Activated B cell treated with CpG ODN at 0.5 μM for 24 hours (primary cell): ENCODE measurements at regions of chr7 and their contacts with region 1.

Region 1: DNA sequence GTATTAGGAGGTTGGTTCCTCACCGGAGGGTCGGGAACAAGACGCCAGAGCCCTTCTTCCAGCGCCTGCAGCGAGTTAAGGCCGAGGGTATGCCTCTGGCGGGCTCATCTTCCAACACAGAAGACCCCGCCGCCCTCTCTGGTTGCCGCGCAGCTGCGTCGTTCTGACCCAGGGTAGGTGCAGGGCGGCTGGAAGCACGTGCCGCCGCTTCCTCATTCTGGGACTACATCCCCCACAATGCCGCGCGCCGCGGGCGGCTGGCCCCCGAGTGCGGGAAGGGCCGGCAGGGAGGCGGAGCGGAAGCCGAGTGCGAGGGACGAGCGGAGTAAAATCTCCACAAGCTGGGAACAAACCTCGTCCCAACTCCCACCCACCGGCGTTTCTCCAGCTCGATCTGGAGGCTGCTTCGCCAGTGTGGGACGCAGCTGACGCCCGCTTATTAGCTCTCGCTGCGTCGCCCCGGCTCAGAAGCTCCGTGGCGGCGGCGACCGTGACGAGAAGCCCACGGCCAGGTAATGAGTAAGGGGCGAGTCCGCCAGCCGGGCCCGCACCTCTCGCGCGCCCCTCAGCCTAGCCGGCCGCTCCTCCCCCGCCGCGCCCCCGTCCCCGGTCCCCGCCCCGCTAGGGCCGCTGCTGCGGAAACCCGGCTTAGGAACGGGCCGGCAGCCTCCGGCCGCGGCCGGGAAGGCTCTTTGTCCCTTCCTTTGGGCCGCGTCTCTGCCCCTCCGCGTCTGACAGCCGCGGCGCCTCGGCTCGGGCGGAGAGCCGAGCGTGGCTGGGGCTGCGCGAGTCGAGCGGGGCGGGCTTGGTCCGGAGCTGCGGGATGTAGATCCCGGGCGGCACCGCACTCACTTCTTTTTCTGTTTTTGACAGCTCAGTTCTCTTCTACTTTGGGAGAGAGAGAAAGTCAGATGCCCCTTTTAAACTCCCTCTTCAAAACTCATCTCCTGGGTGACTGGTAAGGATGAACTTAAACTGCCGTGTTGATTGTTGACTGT is at the start of gene CCDC126:
- DNase-seq: peak; percentile 84
- ATAC-seq: peak; percentile 72
- H3K4me3 Mint-ChIP-seq: peak within 1 kb of the TSS; percentile 89
- H3K27ac Mint-ChIP-seq: peak within 1 kb of the TSS; percentile 51
- H3K4me1 Mint-ChIP-seq: peaks cover 58% of the 10 kb centered on the region
- H3K27me3 Mint-ChIP-seq: no peaks in the 10 kb centered on the region
- CTCF ChIP-seq: no peak
- total RNA-seq, gene CCDC126: 13.7 and 15.7 TPM in 2 replicates

Region 2: DNA sequence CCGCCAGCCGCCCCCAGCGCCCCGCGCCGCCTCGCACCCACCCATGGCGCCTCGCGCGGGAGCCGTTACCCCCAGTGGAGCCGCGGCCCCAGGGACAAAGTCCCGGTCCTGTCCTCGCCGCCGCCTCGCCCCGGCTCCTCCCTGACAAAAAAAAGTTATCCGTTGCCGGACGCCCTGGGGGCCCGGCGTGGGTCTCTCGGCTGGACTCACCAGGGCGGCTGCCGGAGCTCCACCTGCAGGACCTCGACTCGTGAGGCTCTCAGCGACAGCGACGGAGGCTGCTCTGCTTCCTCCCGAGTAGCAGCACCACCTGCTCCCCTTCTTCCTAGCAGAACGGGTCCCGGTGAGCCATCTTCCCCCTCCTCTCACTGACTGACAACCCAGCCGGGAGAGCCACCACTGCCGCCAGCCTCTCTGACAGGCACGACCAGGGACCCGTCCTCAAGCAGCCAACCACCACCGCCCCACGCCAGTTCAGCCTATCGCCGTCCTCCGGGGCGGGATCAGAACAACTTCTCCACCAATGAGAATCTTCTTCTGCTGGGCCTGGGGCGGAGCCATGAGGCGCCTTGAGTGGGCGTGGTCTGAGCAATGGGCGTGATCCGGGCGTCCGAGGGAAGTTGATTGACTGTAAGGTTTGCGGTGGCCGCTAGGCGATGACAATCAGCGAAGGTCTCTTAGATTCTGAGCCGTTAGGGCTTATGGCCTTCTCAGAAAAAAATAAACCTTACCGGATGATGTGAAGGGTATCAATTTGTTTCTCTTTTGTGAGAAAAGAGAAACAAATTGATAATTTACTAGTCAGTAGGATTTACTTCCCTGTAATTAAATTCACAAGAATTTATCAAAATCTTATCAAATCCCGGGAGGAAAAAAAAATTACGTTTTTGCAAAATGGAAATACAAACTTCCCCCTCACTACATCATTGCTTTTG is 583.4 kb before region 1 on chr7 and contains the start of gene HYCC1:
- CTCF ChIA-PET with region 1: no interaction called
- POLR2A ChIA-PET with region 1: no interaction called
- intact Hi-C with region 1: loop called (anchors 5 kb)
- DNase-seq: peak; percentile 95
- ATAC-seq: peak; percentile 96
- H3K4me3 Mint-ChIP-seq: peak within 1 kb of the TSS; percentile 99
- H3K27ac Mint-ChIP-seq: peak within 1 kb of the TSS; percentile 93
- H3K4me1 Mint-ChIP-seq: peaks cover 44% of the 10 kb centered on the region
- H3K27me3 Mint-ChIP-seq: no peaks in the 10 kb centered on the region
- CTCF ChIP-seq: no peak
- total RNA-seq, gene HYCC1: 39.9 and 41.9 TPM in 2 replicates

Region 3: GRCh38 chr7:23298885-23299769 is 298.3 kb before region 1 on chr7 and contains the start of gene MALSU1:
- CTCF ChIA-PET with region 1: no interaction called
- POLR2A ChIA-PET with region 1: no interaction called
- intact Hi-C with region 1: loop called (anchors 1 kb)
- DNase-seq: peak; percentile 95
- ATAC-seq: peak; percentile 99
- H3K4me3 Mint-ChIP-seq: peak within 1 kb of the TSS; percentile 89
- H3K27ac Mint-ChIP-seq: peak within 1 kb of the TSS; percentile 95
- H3K4me1 Mint-ChIP-seq: peaks cover 39% of the 10 kb centered on the region
- H3K27me3 Mint-ChIP-seq: peaks cover 4% of the 10 kb centered on the region
- CTCF ChIP-seq: no peak
- total RNA-seq, gene MALSU1: 42.0 and 42.6 TPM in 2 replicates

Region 4: GRCh38 chr7:23474094-23474828 is 123.1 kb before region 1 on chr7:
- CTCF ChIA-PET with region 1: no interaction called
- POLR2A ChIA-PET with region 1: no interaction called
- intact Hi-C with region 1: loop called (anchors 5 kb)
- DNase-seq: peak; percentile 62
- ATAC-seq: peak; percentile 67
- H3K4me3 Mint-ChIP-seq: peak overlapping the region; percentile 77
- H3K27ac Mint-ChIP-seq: peak overlapping the region; percentile 41
- H3K4me1 Mint-ChIP-seq: peaks cover 30% of the 10 kb centered on the region
- H3K27me3 Mint-ChIP-seq: peaks cover 49% of the 10 kb centered on the region
- CTCF ChIP-seq: no peak

Region 5: GRCh38 chr7:23570592-23571200 is 26.7 kb before region 1 on chr7:
- CTCF ChIA-PET with region 1: interaction called, 3 read pairs
- POLR2A ChIA-PET with region 1: interaction called, 3 read pairs
- intact Hi-C with region 1: loop called (anchors 2 kb)
- DNase-seq: peak; percentile 53
- ATAC-seq: peak; percentile 89
- H3K4me3 Mint-ChIP-seq: no peak overlapping the region
- H3K27ac Mint-ChIP-seq: no peak overlapping the region
- H3K4me1 Mint-ChIP-seq: no peaks in the 10 kb centered on the region
- H3K27me3 Mint-ChIP-seq: peaks cover 14% of the 10 kb centered on the region
- CTCF ChIP-seq: peak; percentile 29

Region 6: DNA sequence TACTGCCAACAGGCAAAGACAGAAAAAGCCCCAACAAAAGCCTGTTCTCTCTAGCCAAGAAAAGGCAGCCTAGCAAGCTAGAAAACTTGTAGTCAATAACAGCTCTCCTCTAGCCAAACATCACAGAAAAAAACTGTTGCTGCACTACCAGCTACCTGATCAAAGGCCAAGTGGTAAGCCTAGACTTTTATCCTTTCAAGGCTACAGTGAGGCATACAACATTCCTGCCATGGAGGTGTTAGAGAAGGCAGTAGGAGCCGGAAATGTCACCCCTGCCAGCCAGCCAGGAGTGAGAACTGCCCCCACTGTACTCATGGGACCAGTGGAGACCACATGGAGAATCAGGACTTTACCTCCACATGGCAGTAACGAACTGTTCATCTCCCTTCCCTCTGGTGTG is 31.0 kb after region 1 on chr7:
- CTCF ChIA-PET with region 1: no interaction called
- POLR2A ChIA-PET with region 1: no interaction called
- intact Hi-C with region 1: no loop called
- DNase-seq: no peak
- ATAC-seq: no peak
- H3K4me3 Mint-ChIP-seq: no peak overlapping the region
- H3K27ac Mint-ChIP-seq: no peak overlapping the region
- H3K4me1 Mint-ChIP-seq: no peaks in the 10 kb centered on the region
- H3K27me3 Mint-ChIP-seq: no peaks in the 10 kb centered on the region
- CTCF ChIP-seq: no peak

Region 7: DNA sequence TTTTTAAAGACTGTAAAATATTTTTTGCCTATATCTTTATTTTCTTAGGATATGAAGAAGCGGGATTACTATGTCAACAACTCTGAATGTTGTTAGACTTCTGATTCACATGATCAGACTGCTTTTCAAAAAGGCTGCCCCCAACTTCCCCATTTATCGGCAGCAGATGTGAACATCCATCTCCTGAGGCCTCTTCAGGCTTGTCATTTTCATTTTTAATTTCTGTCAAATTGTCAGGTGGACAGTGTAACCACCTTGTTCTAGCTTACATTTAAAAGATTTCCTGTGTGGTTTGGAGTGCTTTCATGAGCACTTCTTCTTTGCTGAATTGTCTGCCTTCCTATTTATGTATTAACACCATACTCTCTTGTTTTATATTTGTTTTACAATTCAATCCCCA is 1238.7 kb after region 1 on chr7:
- CTCF ChIA-PET with region 1: no interaction called
- POLR2A ChIA-PET with region 1: no interaction called
- intact Hi-C with region 1: loop called (anchors 5 kb)
- DNase-seq: no peak
- ATAC-seq: peak; percentile 79
- H3K4me3 Mint-ChIP-seq: peak overlapping the region; percentile 39
- H3K27ac Mint-ChIP-seq: peak overlapping the region; percentile 99
- H3K4me1 Mint-ChIP-seq: peaks cover 75% of the 10 kb centered on the region
- H3K27me3 Mint-ChIP-seq: no peaks in the 10 kb centered on the region
- CTCF ChIP-seq: no peak

Region 8: GRCh38 chr7:25179771-25180591 is 1582.6 kb after region 1 on chr7:
- CTCF ChIA-PET with region 1: no interaction called
- POLR2A ChIA-PET with region 1: no interaction called
- intact Hi-C with region 1: loop called (anchors 1 kb)
- DNase-seq: peak; percentile 100
- ATAC-seq: peak; percentile 97
- H3K4me3 Mint-ChIP-seq: peak overlapping the region; percentile 87
- H3K27ac Mint-ChIP-seq: peak overlapping the region; percentile 95
- H3K4me1 Mint-ChIP-seq: peaks cover 15% of the 10 kb centered on the region
- H3K27me3 Mint-ChIP-seq: no peaks in the 10 kb centered on the region
- CTCF ChIP-seq: peak; percentile 46